Sigmoid colon (tissue), 7 donors: ENCODE measurements at regions of chr19 and their contacts with region 1.

Region 1: GRCh38 chr19:34733826-34734600 is at the start of gene ZNF181:
- DNase-seq: peak; percentile 94
- H3K4me3 ChIP-seq: peak within 1 kb of the TSS; percentile 68 to 90 (median 77)
- H3K27ac ChIP-seq: peak within 1 kb of the TSS; percentile 93 to 99 (median 96)
- H3K4me1 ChIP-seq: peaks cover 0 to 30% (median 26%) of the 10 kb centered on the region in 4 donors
- H3K27me3 ChIP-seq: no peaks in the 10 kb centered on the region
- CTCF ChIP-seq: no peak
- EP300 ChIP-seq: peak in 1 of 4 donors; percentile 23
- POLR2A ChIP-seq: peak in 1 of 2 donors; percentile 43
- total RNA-seq, gene ZNF181: 26.6 to 52.3 (median 42.4) TPM

Region 2: DNA sequence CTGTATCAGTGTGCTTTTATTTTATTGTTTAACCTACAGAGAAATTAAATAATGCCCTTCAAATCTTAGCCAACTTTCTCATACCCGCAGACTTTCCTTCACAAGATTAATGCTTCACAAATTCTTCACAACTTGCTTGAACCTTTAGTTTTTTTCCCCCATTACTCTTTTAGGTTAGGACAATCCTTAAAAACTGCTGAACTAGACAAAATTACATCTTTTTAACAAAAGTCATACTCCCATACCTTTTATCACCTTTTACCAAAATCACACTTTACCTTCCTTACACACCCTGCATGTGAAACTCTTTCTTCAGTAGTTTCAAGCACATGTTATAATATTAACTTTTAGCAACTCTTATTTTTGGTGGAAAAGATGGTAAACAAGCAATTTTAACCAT is 115.6 kb before region 1 on chr19:
- intact Hi-C with region 1: no loop called
- DNase-seq: no peak
- H3K4me3 ChIP-seq: no peak overlapping the region
- H3K27ac ChIP-seq: no peak overlapping the region
- H3K4me1 ChIP-seq: no peaks in the 10 kb centered on the region
- H3K27me3 ChIP-seq: no peaks in the 10 kb centered on the region
- CTCF ChIP-seq: no peak
- EP300 ChIP-seq: no peak
- POLR2A ChIP-seq: no peak

Region 3: GRCh38 chr19:34707661-34708060 is 26.4 kb before region 1 on chr19:
- intact Hi-C with region 1: no loop called
- DNase-seq: no peak
- H3K4me3 ChIP-seq: no peak overlapping the region
- H3K27ac ChIP-seq: no peak overlapping the region
- H3K4me1 ChIP-seq: no peaks in the 10 kb centered on the region
- H3K27me3 ChIP-seq: no peaks in the 10 kb centered on the region
- CTCF ChIP-seq: no peak
- EP300 ChIP-seq: no peak
- POLR2A ChIP-seq: no peak

Region 4: DNA sequence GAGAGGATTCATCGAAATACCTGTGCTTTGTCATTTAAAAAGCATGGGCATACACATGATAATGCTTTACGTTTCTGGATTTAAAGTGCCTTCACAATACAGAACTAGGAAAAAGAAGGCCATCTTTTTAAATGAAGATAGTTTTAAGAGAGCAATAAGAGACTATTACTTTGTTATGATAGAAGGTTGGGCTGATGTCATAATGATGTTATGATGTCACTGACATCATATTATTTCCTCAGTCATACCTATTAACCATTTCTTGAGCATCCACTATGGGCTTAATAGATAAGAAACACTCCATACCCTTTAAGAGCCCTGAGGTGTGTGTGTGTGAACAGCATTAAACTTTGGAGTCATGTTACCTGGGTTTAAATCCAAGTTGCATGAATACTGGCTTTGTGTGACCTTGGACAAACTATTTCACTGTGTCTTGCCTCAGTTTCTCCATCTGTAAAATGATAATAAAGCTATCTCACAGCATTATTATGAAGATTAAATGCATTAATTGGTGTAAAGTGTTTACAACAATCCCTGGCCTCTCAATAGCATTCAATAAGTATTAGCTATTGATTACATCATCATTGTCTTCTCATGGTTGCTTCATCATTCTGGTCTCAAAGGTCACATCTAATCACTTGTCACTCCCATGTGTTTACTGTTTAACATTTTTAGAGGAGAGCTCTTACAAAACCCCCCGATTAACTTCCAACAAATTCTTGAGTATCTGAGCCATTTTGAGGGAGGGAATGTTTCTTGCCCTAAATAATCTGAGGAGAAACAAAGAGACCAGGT is 11.1 kb after region 1 on chr19:
- intact Hi-C with region 1: no loop called
- DNase-seq: no peak
- H3K4me3 ChIP-seq: no peak overlapping the region
- H3K27ac ChIP-seq: no peak overlapping the region
- H3K4me1 ChIP-seq: no peaks in the 10 kb centered on the region
- H3K27me3 ChIP-seq: no peaks in the 10 kb centered on the region
- CTCF ChIP-seq: no peak
- EP300 ChIP-seq: no peak
- POLR2A ChIP-seq: no peak

Region 5: GRCh38 chr19:34772697-34773554 is 38.9 kb after region 1 on chr19 and contains the start of gene ZNF599:
- intact Hi-C with region 1: loop called (anchors 2 kb)
- DNase-seq: peak; percentile 95
- H3K4me3 ChIP-seq: peak within 1 kb of the TSS; percentile 70 to 87 (median 81)
- H3K27ac ChIP-seq: peak within 1 kb of the TSS; percentile 81 to 90 (median 86)
- H3K4me1 ChIP-seq: peaks cover 0 to 18% (median 12%) of the 10 kb centered on the region in 4 donors
- H3K27me3 ChIP-seq: no peaks in the 10 kb centered on the region
- CTCF ChIP-seq: no peak
- EP300 ChIP-seq: peak in 1 of 4 donors; percentile 63
- POLR2A ChIP-seq: peak; percentile 46 to 53
- total RNA-seq, gene ZNF599: 7.1 to 11.9 (median 7.3) TPM